ENCODE measurements at regions of chr2 and their contacts with region 1.

Region 1: DNA sequence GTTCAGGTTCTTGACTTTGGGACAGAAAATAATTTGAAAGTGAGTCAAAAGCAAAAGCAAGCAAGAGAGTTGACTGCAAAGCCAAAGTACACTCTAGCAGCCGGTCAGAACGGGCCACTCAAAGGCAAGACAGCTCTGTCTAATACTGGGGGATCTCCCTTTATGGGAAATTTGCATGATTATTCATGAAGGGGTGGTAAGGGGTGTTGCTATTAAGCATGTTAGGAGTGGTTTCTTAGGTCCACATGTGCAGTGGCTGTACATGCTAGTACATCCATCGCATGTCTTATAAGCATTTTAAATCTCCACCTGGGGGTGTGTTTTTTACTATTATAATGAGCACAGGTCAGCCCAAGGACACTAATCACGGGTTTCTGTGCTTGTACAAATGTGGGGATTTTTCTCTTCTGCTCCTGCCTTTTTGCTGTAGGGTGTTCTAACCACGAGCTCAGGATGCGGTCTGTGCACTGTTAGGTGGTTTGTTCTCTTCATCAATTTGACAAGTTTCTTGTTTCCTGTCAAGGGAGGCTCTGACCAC is 60.2 kb upstream of the SPP2 start:
- DNase-seq: no peak
- H3K4me3 ChIP-seq: no peak overlapping the region
- H3K27ac ChIP-seq: no peak overlapping the region
- H3K4me1 ChIP-seq: no peaks in the 10 kb centered on the region
- H3K27me3 ChIP-seq: no peaks in the 10 kb centered on the region
- CTCF ChIP-seq: no peak

Region 2: DNA sequence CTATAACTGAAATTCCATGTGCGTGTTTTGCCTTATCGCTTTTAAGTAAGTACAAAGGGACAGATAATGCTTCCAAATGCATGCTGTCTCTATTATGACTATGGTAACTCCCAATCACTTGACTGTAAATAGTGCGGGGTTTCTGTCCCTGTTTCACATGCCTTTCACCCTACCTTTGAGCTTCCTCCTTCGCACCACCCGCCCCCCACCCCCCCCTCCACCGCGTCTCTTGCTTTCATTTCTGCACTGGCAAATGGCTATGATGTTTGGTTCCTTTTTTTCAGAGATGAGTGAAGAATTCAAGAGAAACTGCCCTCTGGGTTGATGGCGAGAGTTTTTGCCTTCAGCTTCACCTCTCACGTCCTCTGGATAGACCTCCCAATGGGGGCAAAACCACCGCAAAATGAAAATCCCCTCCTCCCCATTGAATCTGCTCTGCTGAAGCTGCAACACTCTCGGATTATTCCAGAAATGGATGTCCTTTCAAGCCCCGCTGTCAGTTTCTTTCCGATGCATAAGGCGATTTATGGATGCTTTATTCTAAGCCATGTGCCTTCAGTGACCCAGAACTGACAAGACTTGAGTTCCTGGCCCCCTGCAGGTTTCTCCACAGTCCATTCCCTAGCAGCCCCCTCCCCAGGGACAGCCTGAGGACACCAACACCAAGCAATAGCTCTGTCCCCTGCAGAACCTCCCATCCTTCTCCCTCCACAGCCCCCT is 35.3 kb after region 1 on chr2:
- CTCF ChIA-PET with region 1: no interaction called
- POLR2A ChIA-PET with region 1: no interaction called
- intact Hi-C with region 1: no loop called
- DNase-seq: no peak
- H3K4me3 ChIP-seq: no peak overlapping the region
- H3K27ac ChIP-seq: no peak overlapping the region
- H3K4me1 ChIP-seq: no peaks in the 10 kb centered on the region
- H3K27me3 ChIP-seq: no peaks in the 10 kb centered on the region
- CTCF ChIP-seq: no peak

Region 3: DNA sequence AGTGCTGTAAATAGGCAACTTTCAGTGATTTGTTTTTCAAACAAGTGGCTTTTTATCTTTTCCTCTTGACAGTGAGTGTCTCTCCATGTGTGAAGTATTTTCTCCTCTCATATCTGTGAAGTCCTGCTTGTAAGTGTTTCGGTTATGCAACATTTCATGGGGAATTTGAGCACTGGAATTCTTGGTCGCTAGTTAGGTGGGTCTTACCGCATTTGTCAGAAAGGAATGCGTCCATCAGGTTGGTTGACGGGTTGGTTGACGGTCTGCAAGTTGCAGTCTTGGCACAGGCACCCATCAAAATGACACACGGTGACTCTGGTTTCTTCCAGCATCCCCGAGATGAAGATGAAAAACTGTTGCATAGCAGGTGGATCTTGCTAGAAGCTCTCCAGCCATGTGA is 1613.3 kb after region 1 on chr2:
- CTCF ChIA-PET with region 1: no interaction called
- POLR2A ChIA-PET with region 1: interaction called, 12 read pairs
- intact Hi-C with region 1: no loop called
- DNase-seq: peak in 1 of 2 experiments; percentile 54
- H3K4me3 ChIP-seq: no peak overlapping the region
- H3K27ac ChIP-seq: peak overlapping the region; percentile 15; the same call in 1 of the 2 replicates
- H3K4me1 ChIP-seq: no peaks in the 10 kb centered on the region
- H3K27me3 ChIP-seq: no peaks in the 10 kb centered on the region
- CTCF ChIP-seq: no peak